Naive thymus-derived CD4-positive, alpha-beta T cell (primary cell): ENCODE measurements at regions of chr1 and their contacts with region 1.

Region 1: DNA sequence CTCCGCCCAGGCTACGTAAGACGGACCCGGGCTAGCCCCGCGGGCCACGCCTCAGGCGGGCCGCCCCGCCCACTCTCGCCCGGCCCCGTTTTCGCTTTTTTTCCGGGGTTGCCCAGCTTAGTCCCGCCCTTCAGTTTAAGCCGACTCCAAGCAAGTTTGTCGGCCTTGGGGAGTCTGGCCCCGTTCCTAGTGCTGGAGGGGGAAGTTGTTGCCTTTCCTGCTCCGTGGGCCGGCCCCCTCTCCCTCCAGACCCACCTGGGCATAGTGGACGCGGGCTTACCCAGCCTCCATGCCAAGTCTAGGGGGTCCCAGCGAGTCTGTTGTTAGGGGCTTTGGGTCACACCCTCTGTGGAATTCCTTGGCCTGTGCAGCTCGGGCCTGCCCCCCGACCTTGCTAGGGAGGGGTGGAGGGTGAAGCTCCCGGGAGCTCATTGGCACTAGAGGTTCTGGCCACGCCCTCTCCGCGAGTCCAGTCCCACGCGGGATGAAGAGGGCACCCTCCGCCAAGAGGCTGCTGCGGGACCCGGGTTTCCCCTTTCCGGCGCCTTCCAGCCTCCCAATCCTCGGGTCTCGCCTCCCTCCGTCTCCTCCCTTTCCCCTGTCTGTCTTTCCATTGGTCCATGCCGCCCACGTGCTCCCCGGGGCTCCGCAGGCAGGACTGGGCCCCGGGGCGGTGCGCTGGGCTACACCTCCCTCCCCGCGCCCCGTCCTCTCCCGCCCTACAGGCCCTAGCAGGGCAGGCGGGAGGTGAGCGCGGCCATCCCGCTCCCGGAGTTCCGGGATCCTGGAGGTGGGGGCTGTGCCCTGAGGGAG is 3.3 kb downstream of the RUSC1 start:
- DNase-seq: peak; percentile 75 to 95 (median 80)
- ATAC-seq: peak; percentile 86
- H3K4me3 ChIP-seq: peak overlapping the region; percentile 100
- H3K4me3 Mint-ChIP-seq: peak overlapping the region; percentile 80 to 91 (median 89)
- H3K27ac ChIP-seq: peak overlapping the region; percentile 90
- H3K27ac Mint-ChIP-seq: peak overlapping the region; percentile 44 to 86 (median 73)
- H3K4me1 ChIP-seq: peaks cover 0 to 12% of the 10 kb centered on the region in 2 donors
- H3K4me1 Mint-ChIP-seq: peaks cover 24 to 38% (median 31%) of the 10 kb centered on the region in 7 donors
- H3K27me3 ChIP-seq: no peaks in the 10 kb centered on the region
- H3K27me3 Mint-ChIP-seq: no peaks in the 10 kb centered on the region

Region 2: GRCh38 chr1:155001675-155002463 is 322.1 kb before region 1 on chr1:
- CTCF ChIA-PET with region 1: no interaction called
- POLR2A ChIA-PET with region 1: no interaction called
- intact Hi-C with region 1: loop called in 1 of 2 experiments (anchors 2 kb)
- DNase-seq: peak; percentile 90 to 98 (median 95)
- ATAC-seq: peak; percentile 87
- H3K4me3 ChIP-seq: peak overlapping the region; percentile 95
- H3K4me3 Mint-ChIP-seq: peak overlapping the region; percentile 90 to 100 (median 95)
- H3K27ac ChIP-seq: peak overlapping the region; percentile 88
- H3K27ac Mint-ChIP-seq: peak overlapping the region; percentile 70 to 99 (median 91)
- H3K4me1 ChIP-seq: peaks cover 23 to 40% of the 10 kb centered on the region in 2 donors
- H3K4me1 Mint-ChIP-seq: peaks cover 29 to 63% (median 55%) of the 10 kb centered on the region in 7 donors
- H3K27me3 ChIP-seq: no peaks in the 10 kb centered on the region
- H3K27me3 Mint-ChIP-seq: no peaks in the 10 kb centered on the region

Region 3: GRCh38 chr1:155193275-155193990 is 130.6 kb before region 1 on chr1:
- CTCF ChIA-PET with region 1: no interaction called
- POLR2A ChIA-PET with region 1: no interaction called
- intact Hi-C with region 1: loop called in 1 of 2 experiments (anchors 5 kb)
- DNase-seq: peak in 8 of 9 donors; percentile 38 to 89 (median 54)
- ATAC-seq: peak; percentile 54
- H3K4me3 ChIP-seq: peak overlapping the region; percentile 57
- H3K4me3 Mint-ChIP-seq: peak overlapping the region; percentile 88 to 97 (median 92)
- H3K27ac ChIP-seq: peak overlapping the region; percentile 76
- H3K27ac Mint-ChIP-seq: peak overlapping the region; percentile 92 to 99 (median 97)
- H3K4me1 ChIP-seq: peaks cover 11 to 25% of the 10 kb centered on the region in 2 donors
- H3K4me1 Mint-ChIP-seq: peaks cover 8 to 35% (median 29%) of the 10 kb centered on the region in 7 donors
- H3K27me3 ChIP-seq: no peaks in the 10 kb centered on the region
- H3K27me3 Mint-ChIP-seq: no peaks in the 10 kb centered on the region

Region 4: GRCh38 chr1:155250633-155251449 is 73.2 kb before region 1 on chr1:
- CTCF ChIA-PET with region 1: interaction called, 105 read pairs
- POLR2A ChIA-PET with region 1: interaction called, 18 read pairs
- intact Hi-C with region 1: loop called (anchors 1 kb)
- DNase-seq: peak; percentile 86 to 98 (median 93)
- ATAC-seq: peak; percentile 99
- H3K4me3 ChIP-seq: peak overlapping the region; percentile 54
- H3K4me3 Mint-ChIP-seq: peak overlapping the region in 9 of 10 donors; percentile 45 to 83 (median 62)
- H3K27ac ChIP-seq: peak overlapping the region; percentile 49
- H3K27ac Mint-ChIP-seq: peak overlapping the region in 7 of 9 donors; percentile 29 to 86 (median 69)
- H3K4me1 ChIP-seq: peaks cover 4 to 10% of the 10 kb centered on the region in 2 donors
- H3K4me1 Mint-ChIP-seq: peaks cover 21 to 36% (median 24%) of the 10 kb centered on the region in 7 donors
- H3K27me3 ChIP-seq: no peaks in the 10 kb centered on the region
- H3K27me3 Mint-ChIP-seq: no peaks in the 10 kb centered on the region

Region 5: DNA sequence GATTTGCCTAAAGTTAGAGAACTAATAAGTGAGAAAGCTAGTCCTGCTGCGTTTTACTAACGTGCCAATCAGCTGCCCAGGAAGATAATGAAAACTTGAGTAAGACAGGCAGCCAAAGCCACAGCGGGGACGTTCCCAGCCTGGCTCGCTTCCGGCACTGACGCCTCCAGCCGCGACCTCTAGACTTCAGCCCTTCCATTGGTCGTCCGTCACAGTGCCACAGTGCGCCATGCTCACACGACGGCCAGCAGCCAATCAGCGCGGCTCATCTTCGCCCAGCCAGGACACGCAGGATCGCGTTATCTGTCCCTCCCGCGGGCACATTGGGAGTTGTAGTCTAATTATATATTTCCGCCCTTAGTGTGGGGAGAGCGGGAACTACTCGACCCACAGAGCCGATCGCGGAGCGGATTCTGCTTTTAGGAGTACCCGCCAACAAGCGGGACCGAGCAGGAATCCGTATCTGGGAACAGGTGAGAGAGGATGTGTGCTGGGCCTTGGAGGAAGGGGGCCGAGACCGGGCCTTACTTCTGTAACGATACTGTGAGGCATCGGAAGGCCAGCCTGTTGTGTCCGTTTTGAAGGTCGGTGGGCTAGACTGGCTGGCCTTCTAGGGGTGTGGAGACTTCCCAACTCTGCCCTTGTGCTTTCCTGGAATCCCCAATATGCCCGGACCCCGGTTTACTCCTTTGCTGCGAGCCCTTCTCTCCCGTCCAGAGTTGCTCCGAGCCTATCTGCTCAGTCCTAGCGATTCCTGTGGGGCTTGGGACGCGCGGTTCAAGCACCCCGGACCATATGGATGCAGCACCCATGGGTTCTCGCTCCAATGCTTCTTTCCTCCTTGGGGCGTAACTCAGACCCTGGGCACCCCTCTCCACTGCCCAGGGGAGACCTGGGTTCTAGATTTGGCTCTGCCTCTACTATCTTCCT is 15.2 kb before region 1 on chr1 and contains the start of gene FDPS:
- CTCF ChIA-PET with region 1: interaction called, 10 read pairs
- POLR2A ChIA-PET with region 1: interaction called, 15 read pairs
- intact Hi-C with region 1: loop called (anchors 1 kb)
- DNase-seq: peak; percentile 83 to 98 (median 95)
- ATAC-seq: peak; percentile 98
- H3K4me3 ChIP-seq: peak within 1 kb of the TSS; percentile 90
- H3K4me3 Mint-ChIP-seq: peak within 1 kb of the TSS; percentile 88 to 99 (median 97)
- H3K27ac ChIP-seq: peak within 1 kb of the TSS; percentile 87
- H3K27ac Mint-ChIP-seq: peak within 1 kb of the TSS; percentile 89 to 98 (median 96)
- H3K4me1 ChIP-seq: peaks cover 11 to 20% of the 10 kb centered on the region in 2 donors
- H3K4me1 Mint-ChIP-seq: peaks cover 12 to 43% (median 27%) of the 10 kb centered on the region in 7 donors
- H3K27me3 ChIP-seq: no peaks in the 10 kb centered on the region
- H3K27me3 Mint-ChIP-seq: no peaks in the 10 kb centered on the region
- total RNA-seq, gene FDPS: 58.5 to 193 (median 79.0) TPM

Region 6: GRCh38 chr1:155911156-155912055 is 587.4 kb after region 1 on chr1 and contains the start of gene RIT1:
- CTCF ChIA-PET with region 1: no interaction called
- POLR2A ChIA-PET with region 1: no interaction called
- intact Hi-C with region 1: loop called (anchors 5 to 10 kb)
- DNase-seq: peak; percentile 68 to 85 (median 76)
- ATAC-seq: peak; percentile 99
- H3K4me3 ChIP-seq: peak within 1 kb of the TSS; percentile 73
- H3K4me3 Mint-ChIP-seq: peak within 1 kb of the TSS; percentile 85 to 99 (median 96)
- H3K27ac ChIP-seq: peak within 1 kb of the TSS; percentile 80
- H3K27ac Mint-ChIP-seq: peak within 1 kb of the TSS; percentile 90 to 99 (median 96)
- H3K4me1 ChIP-seq: peaks cover 5 to 17% of the 10 kb centered on the region in 2 donors
- H3K4me1 Mint-ChIP-seq: peaks cover 11 to 38% (median 21%) of the 10 kb centered on the region in 7 donors
- H3K27me3 ChIP-seq: no peaks in the 10 kb centered on the region
- H3K27me3 Mint-ChIP-seq: no peaks in the 10 kb centered on the region
- total RNA-seq, gene RIT1: 34.0 to 83.9 (median 41.4) TPM